ENCODE measurements at regions of chr14 and their contacts with region 1.

Region 1: DNA sequence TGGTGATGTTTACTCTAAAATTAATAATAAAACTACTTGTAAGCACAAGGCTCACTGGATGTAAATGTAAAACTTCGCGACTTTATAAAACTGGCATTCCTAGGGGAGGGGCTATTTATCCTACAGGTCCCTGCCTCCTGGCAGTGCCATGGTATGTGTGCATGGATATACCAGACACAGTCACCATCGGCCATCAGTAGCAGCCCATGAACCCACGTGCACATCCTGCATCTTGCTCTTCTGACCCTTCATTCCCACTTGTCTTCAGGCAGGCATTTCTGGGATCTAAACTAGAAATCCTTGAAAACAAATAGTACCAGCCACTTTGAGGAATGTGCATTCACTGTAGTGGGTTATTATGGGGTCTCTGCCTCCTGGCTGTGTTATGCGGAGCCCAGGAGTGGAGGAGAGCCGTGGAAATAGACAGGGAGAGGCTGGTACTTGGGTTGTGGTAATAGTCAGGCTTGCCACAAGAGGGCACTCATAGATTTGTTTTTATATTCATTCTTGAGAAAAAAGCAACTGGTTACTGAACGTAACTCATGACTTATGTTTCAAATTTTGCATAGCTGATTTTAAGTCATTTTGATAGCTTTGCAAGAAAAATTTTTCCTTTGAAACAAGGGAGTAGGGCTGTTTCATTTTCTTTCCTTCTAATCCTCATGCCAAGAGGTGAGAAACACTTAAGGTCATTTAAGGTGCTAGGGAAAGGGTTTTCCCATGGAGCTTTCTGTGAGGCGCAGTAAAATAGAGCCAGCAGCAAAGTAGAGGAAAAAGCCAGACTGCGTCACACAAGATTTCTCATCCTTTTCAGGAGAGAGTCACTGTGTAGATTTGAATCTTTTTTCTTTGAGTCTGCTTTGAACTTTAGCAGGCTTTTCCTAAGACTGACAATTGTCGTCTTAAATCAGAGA is 17.4 kb upstream of the GALNT16 start:
- DNase-seq: peak; percentile 77
- H3K4me3 Mint-ChIP-seq: no peak overlapping the region
- H3K27ac Mint-ChIP-seq: no peak overlapping the region
- H3K4me1 Mint-ChIP-seq: peaks cover 2% of the 10 kb centered on the region
- H3K27me3 Mint-ChIP-seq: no peaks in the 10 kb centered on the region

Region 2: GRCh38 chr14:69226178-69226577 is 16.4 kb before region 1 on chr14:
- CTCF ChIA-PET with region 1: interaction called, 10 read pairs
- intact Hi-C with region 1: no loop called
- DNase-seq: no peak
- H3K4me3 Mint-ChIP-seq: no peak overlapping the region
- H3K27ac Mint-ChIP-seq: no peak overlapping the region
- H3K4me1 Mint-ChIP-seq: no peaks in the 10 kb centered on the region
- H3K27me3 Mint-ChIP-seq: no peaks in the 10 kb centered on the region

Region 3: GRCh38 chr14:69460093-69460701 is 217.6 kb after region 1 on chr14:
- CTCF ChIA-PET with region 1: interaction called, 39 read pairs
- intact Hi-C with region 1: loop called (anchors 1 kb)
- DNase-seq: peak; percentile 80
- H3K4me3 Mint-ChIP-seq: no peak overlapping the region
- H3K27ac Mint-ChIP-seq: no peak overlapping the region
- H3K4me1 Mint-ChIP-seq: no peaks in the 10 kb centered on the region
- H3K27me3 Mint-ChIP-seq: no peaks in the 10 kb centered on the region

Measured in activated naive CD4-positive, alpha-beta T cell treated with anti-CD3 and anti-CD28 coated beads for 36 hours (primary cell).